ENCODE measurements at regions of chr7 and their contacts with region 1.

Region 1: GRCh38 chr7:37408291-37409228 is 40.1 kb downstream of the ELMO1 start:
- DNase-seq: no peak
- ATAC-seq: peak in 1 of 4 donors; percentile 14
- H3K4me3 ChIP-seq: peak overlapping the region in 1 of 12 donors; percentile 15
- H3K27ac ChIP-seq: peak overlapping the region in 5 of 12 donors; percentile 11 to 70 (median 14)
- H3K4me1 ChIP-seq: peaks cover 0 to 79% (median 26%) of the 10 kb centered on the region in 12 donors
- H3K27me3 ChIP-seq: no peaks in the 10 kb centered on the region
- CTCF ChIP-seq: no peak
- POLR2A ChIP-seq: no peak

Region 2: GRCh38 chr7:37031571-37032257 is 376.8 kb before region 1 on chr7:
- intact Hi-C with region 1: loop called in 1 of 10 experiments (anchors 5 kb)
- DNase-seq: peak in 4 of 5 donors; percentile 73 to 86 (median 81)
- ATAC-seq: peak; percentile 99 to 100 (median 100)
- H3K4me3 ChIP-seq: no peak overlapping the region
- H3K27ac ChIP-seq: peak overlapping the region; percentile 18 to 82 (median 72)
- H3K4me1 ChIP-seq: peaks cover 8 to 32% (median 18%) of the 10 kb centered on the region in 12 donors
- H3K27me3 ChIP-seq: no peaks in the 10 kb centered on the region
- CTCF ChIP-seq: no peak
- POLR2A ChIP-seq: no peak

Region 3: GRCh38 chr7:37462138-37462537 is 53.6 kb after region 1 on chr7:
- intact Hi-C with region 1: no loop called
- DNase-seq: no peak
- ATAC-seq: no peak
- H3K4me3 ChIP-seq: no peak overlapping the region
- H3K27ac ChIP-seq: no peak overlapping the region
- H3K4me1 ChIP-seq: peaks cover 0 to 6% (median 0%) of the 10 kb centered on the region in 12 donors
- H3K27me3 ChIP-seq: peaks cover 0 to 5% (median 0%) of the 10 kb centered on the region in 9 donors
- CTCF ChIP-seq: no peak
- POLR2A ChIP-seq: no peak